GM18951 (cell line): ENCODE measurements at regions of chr5 and their contacts with region 1.

Region 1: DNA sequence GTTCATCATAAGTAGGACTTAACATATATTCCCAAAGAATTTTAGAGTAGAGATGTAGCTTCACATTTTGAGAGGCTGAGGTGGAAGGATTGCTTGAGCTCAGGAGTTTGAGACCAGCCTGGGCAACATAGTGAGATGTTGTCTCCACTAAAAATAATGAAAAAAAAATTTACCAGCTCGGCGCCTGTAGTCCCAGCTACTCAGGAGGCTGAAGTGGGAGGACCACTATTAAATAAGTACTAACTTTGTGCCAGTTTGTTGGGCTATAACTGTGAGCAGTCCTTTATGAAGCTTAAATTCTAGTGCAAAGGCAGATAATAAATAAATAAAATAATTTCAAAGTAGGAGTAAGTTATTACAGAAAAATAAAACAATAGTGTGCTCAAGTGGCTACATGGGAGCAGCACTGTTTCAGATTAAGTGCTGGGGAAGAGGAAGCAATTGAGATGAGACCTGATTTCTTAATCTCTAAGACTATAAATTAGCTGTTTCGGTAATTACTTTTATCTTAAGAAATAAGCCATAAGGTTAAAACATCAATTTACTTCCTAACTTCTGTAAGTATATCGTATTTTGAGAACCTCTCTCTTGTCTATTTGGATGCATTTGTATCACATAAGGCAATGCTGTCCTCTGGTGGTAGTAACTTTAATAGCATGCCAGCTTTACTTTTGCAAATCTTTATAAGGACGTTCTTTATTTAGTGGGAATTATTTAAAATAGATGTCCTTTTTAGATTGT is 98.9 kb downstream of the CSNK1G3 start:
- POLR2A ChIP-seq: no peak

Region 2: GRCh38 chr5:123193176-123193575 is 417.7 kb before region 1 on chr5:
- in situ Hi-C with region 1: no loop called
- POLR2A ChIP-seq: no peak

Region 3: GRCh38 chr5:123423278-123424149 is 187.3 kb before region 1 on chr5 and contains the start of gene CEP120:
- in situ Hi-C with region 1: loop called (anchors 25 kb)
- POLR2A ChIP-seq: peak; percentile 92

Region 4: GRCh38 chr5:123460296-123460729 is 150.5 kb before region 1 on chr5:
- in situ Hi-C with region 1: no loop called
- POLR2A ChIP-seq: no peak

Region 5: GRCh38 chr5:123511648-123512605 is 98.9 kb before region 1 on chr5 and contains the start of gene CSNK1G3:
- in situ Hi-C with region 1: loop called (anchors 10 kb)
- POLR2A ChIP-seq: peak; percentile 85